Posterior vena cava (tissue), 2 donors: ENCODE measurements at regions of chrX and their contacts with region 1.

Region 1: DNA sequence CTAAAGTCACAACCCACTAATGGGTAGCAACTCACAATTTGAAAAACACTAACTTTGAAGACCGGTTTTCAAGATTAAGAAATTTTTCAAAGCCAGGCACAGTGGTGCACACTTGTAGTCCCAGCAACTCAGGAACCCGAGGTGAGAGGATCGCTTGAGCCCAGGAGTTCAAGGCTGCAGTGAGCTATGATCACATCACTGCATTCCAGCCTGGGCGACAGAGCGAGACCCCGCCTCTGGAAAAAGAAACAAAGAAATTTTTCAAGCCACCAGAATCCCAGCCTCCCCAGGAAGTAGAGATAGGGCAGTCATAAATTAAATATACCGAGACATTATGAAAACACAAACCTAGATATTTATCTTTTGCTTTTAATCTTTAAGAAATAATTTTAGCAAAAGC is 13.0 kb downstream of the SMARCA1 start:
- DNase-seq: no peak

Region 2: GRCh38 chrX:129529685-129530281 is 19.5 kb after region 1 on chrX:
- intact Hi-C with region 1: loop called in 1 of 2 experiments (anchors 1 kb)
- DNase-seq: no peak